ENCODE measurements at regions of chr19 and their contacts with region 1.

Region 1: DNA sequence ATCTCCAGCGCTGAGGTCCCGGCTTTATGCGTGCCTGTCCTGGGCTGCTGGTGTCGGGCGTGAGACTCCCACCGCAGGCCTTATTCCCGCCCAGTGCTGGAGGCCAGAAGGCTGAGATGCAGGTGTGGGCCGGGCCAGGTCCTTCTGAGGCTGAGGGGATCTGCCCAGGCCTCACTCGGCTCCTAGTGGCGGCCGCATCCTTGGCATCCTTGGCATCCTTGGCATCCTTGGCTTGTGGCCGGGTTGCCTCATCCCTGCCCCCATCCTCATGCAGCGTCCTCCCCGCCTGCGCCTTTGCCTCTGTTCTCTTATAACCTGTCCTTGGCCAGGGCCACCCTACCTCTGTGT is 19.6 kb upstream of the GNA15 start:
- DNase-seq: peak; percentile 52
- H3K4me3 ChIP-seq: no peak overlapping the region
- H3K27ac ChIP-seq: peak overlapping the region; percentile 17
- H3K4me1 ChIP-seq: peaks cover 19% of the 10 kb centered on the region
- H3K27me3 ChIP-seq: no peaks in the 10 kb centered on the region
- CTCF ChIP-seq: no peak

Region 2: GRCh38 chr19:3094601-3095437 is 21.4 kb before region 1 on chr19:
- CTCF ChIA-PET with region 1: no interaction called
- dilution Hi-C with region 1: no loop called
- in situ Hi-C with region 1: no loop called
- intact Hi-C with region 1: loop called (anchors 2 kb)
- DNase-seq: peak; percentile 27
- H3K4me3 ChIP-seq: peak overlapping the region; percentile 72 to 98 (median 93)
- H3K27ac ChIP-seq: peak overlapping the region; percentile 74
- H3K4me1 ChIP-seq: peaks cover 39% of the 10 kb centered on the region
- H3K27me3 ChIP-seq: no peaks in the 10 kb centered on the region
- CTCF ChIP-seq: no peak